ENCODE measurements at regions of chr6 and their contacts with region 1.

Region 1: GRCh38 chr6:42028234-42029061 is 21.9 kb upstream of the TAF8 start:
- DNase-seq: no peak
- ATAC-seq: peak; percentile 29
- H3K4me3 Mint-ChIP-seq: peak overlapping the region; percentile 63
- H3K27ac Mint-ChIP-seq: peak overlapping the region; percentile 97
- H3K4me1 Mint-ChIP-seq: peaks cover 90% of the 10 kb centered on the region
- H3K27me3 Mint-ChIP-seq: no peaks in the 10 kb centered on the region

Region 2: GRCh38 chr6:41846666-41847237 is 181.7 kb before region 1 on chr6:
- CTCF ChIA-PET with region 1: no interaction called
- POLR2A ChIA-PET with region 1: no interaction called
- DNase-seq: peak; percentile 65
- ATAC-seq: peak; percentile 81
- H3K4me3 Mint-ChIP-seq: no peak overlapping the region
- H3K27ac Mint-ChIP-seq: no peak overlapping the region
- H3K4me1 Mint-ChIP-seq: peaks cover 9% of the 10 kb centered on the region
- H3K27me3 Mint-ChIP-seq: no peaks in the 10 kb centered on the region

Region 3: DNA sequence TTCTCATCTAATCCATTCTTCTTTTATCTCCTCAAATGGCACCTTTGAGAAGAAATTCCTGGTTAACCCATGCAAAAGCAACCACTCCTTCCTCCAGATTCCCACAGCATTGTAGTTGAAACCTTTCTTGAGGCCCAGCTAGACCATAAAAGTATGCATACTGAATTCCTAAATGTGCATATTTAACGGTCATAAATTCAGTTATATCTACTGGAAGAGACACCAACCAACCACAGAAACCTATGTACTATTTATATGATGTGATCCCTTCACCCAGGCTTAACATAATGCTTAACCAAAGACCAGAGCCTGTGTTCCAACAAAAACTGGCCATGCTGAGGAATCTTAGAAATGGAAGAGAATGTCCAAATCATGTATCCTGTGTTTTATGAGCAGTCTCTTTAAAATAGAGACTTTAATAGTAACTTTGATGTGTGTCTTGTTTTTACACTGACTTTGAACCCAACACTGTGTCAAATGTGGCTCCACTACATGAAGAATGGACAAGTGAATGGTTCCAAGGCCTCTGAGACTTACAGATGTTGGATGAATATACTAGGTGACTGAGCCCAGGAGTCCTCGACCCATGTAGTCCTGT is 10.5 kb after region 1 on chr6:
- CTCF ChIA-PET with region 1: interaction called, 52 read pairs
- POLR2A ChIA-PET with region 1: interaction called, 17 read pairs
- DNase-seq: no peak
- ATAC-seq: no peak
- H3K4me3 Mint-ChIP-seq: peak overlapping the region; percentile 75
- H3K27ac Mint-ChIP-seq: peak overlapping the region; percentile 92
- H3K4me1 Mint-ChIP-seq: peaks cover 80% of the 10 kb centered on the region
- H3K27me3 Mint-ChIP-seq: no peaks in the 10 kb centered on the region

Region 4: DNA sequence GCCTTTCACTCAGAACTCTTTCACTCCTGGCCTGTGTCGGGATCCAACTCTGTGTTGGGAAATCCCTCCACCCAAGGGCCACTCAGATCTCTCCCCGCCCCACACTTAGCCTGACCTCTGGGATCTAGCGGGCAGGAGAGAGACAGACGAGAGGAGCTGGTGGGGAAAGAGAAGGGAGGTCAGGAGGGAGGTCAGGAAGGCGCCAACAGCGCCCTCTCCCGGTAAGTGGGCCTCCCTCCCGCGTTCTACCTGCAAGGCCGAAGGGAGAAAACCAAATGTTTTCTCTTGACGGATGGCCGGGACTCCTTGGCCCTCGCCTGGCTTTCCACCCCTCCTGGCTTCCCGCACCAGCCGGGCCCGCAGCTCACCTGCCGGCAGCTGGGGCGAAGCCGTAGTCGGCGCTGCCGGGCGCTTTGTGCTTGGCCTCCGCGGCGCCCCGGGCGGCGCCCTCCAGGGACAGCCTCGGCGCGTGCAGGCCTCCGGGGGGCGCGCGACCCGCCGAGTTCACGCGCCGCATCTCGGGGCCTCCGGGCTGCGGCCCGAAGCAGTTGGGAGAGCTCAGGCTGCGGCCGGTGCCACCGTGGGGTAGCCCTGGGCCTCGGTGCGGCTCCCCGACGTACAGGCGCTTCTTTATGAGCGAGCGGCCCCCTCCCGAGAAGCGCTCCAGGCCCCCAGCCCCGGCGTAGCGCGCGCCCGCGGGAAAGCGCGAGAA is 75.8 kb after region 1 on chr6:
- CTCF ChIA-PET with region 1: no interaction called
- POLR2A ChIA-PET with region 1: no interaction called
- DNase-seq: peak; percentile 82
- ATAC-seq: peak; percentile 94
- H3K4me3 Mint-ChIP-seq: peak overlapping the region; percentile 65
- H3K27ac Mint-ChIP-seq: peak overlapping the region; percentile 74
- H3K4me1 Mint-ChIP-seq: peaks cover 30% of the 10 kb centered on the region
- H3K27me3 Mint-ChIP-seq: peaks cover 2% of the 10 kb centered on the region

Region 5: GRCh38 chr6:42251911-42252637 is 223.6 kb after region 1 on chr6:
- CTCF ChIA-PET with region 1: no interaction called
- POLR2A ChIA-PET with region 1: no interaction called
- DNase-seq: no peak
- ATAC-seq: no peak
- H3K4me3 Mint-ChIP-seq: no peak overlapping the region
- H3K27ac Mint-ChIP-seq: peak overlapping the region; percentile 9
- H3K4me1 Mint-ChIP-seq: no peaks in the 10 kb centered on the region
- H3K27me3 Mint-ChIP-seq: no peaks in the 10 kb centered on the region

Measured in activated CD8-positive, alpha-beta T cell treated with anti-CD3 and anti-CD28 coated beads, Interleukin-2, amount 10 ng/mL, durations not matched to agents 7 days and 5 days (primary cell).